Right ventricle myocardium inferior (tissue), 1 donor: ENCODE measurements at regions of chr16 and their contacts with region 1.

Region 1: GRCh38 chr16:27867122-27868110 is 196.1 kb downstream of the GSG1L start:
- DNase-seq: no peak
- ATAC-seq: peak; percentile 73

Region 2: DNA sequence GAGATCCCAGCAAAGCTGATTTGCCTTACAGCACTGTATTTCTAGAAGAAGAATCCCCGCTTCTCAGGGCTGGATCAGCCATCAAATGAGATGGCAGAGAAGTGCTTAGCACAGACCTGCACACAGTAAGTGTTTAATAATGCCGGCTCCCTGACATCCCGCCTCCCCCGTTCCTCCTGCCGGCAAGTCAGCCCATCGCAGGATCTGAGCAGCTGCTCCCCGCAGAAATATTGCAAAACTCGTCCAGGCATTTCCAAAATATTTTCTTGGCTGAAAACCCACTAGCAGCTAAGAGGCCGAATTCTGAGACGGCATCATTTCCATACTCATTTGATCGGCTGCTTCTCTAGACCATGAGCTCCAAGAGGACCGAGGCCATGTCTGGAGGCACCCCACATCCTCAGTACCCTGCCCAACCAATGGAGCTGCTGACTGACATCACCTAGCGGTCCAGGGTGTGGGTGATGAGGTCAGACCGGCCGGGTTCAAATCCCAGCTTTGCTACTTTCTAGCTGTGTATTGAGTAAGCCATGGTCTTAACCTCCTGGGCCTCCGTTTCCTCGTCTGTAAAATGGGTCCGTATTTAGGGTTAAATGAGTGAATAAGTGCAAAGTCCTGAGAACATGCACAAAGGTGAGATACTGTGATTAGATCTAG is 66.0 kb before region 1 on chr16:
- intact Hi-C with region 1: loop called (anchors 10 kb)
- DNase-seq: no peak
- ATAC-seq: no peak